ENCODE measurements at regions of chr11 and their contacts with region 1.

Region 1: GRCh38 chr11:112961146-112961668 is at the start of gene NCAM1:
- DNase-seq: peak; percentile 88
- total RNA-seq, gene NCAM1: 76.8 to 134 TPM

Region 2: DNA sequence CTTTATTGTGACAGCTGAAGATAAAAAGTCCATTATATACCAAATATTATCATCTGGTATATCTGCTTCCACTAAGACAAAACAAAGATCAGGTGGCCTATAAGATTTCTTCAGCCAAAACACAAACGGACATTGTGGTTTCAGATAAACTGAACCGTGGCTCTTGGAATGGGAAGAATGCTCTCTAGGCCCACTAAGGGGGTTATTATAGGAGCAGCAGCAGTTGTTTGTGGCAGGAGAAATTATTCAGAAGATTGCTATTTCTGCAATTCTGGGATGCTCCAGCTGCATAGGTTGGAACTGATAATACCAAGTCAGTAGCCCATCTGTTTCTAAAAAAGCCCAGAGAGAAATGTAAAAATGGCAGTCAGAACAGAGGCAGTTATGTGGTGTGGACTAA is 145.3 kb after region 1 on chr11:
- intact Hi-C with region 1: loop called in 1 of 2 experiments (anchors 10 kb)
- DNase-seq: no peak